Activated T-helper 2 cell treated with anti-CD3 and anti-CD28 coated beads, Interferon-gamma antibody, Interleukin-2, Interleukin-4, amounts not matched to agents 10 μg/mL and 5 μg/mL and 100 μg/mL, durations not matched to agents 14 hours and 24 hours and 36 hours (primary cell): ENCODE measurements at regions of chr2 and their contacts with region 1.

Region 1: GRCh38 chr2:120012771-120013596 is at the start of gene EPB41L5:
- DNase-seq: peak; percentile 72
- H3K4me3 Mint-ChIP-seq: peak within 1 kb of the TSS; percentile 67
- H3K27ac Mint-ChIP-seq: no peak within 1 kb of the TSS
- H3K4me1 Mint-ChIP-seq: peaks cover 10% of the 10 kb centered on the region
- H3K27me3 Mint-ChIP-seq: peaks cover 27% of the 10 kb centered on the region
- total RNA-seq, gene EPB41L5: 0.94 and 1.5 TPM in 2 replicates

Region 2: DNA sequence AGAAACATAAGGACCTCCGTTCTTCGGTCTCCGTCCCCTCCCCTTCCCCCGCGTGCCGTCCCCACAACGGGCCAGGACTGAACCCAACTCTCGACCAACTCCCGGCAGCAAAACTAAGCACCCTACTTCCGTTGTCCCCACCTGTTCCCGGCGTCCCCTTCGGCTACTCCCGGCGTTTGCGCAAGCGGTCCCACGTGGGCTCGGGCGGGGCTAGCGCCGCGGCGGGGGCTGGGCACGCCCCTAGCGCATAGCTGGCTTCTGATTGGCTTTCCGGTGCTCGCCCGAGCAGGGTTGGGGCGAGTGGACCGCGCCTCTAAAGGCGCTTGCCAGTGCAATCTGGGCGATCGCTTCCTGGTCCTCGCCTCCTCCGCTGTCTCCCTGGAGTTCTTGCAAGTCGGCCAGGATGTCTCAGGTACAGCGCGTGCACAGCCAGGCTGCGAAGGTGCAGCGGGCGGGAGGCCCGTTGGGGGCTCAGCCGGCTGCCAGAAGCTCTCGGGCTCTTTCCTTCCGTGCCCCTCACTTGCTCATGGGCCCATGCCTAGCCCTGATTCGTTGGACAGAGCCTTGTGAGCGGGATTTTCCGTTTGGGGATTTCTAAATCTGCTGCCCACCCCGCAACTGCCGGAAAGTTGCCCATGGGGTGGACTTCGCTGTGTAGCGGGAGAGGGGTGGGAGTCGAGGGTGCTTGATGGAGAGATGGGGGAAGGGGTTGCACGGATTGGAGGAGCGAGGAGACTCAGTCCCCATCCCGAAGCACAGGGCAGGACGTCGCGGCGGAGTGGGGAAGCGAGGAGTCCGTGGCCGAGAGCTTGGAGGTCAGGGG is 646.1 kb before region 1 on chr2 and contains the starts of genes C2orf76 and DBI:
- intact Hi-C with region 1: loop called (anchors 2 kb)
- DNase-seq: peak; percentile 93
- H3K4me3 Mint-ChIP-seq: peak within 1 kb of the TSS; percentile 100
- H3K27ac Mint-ChIP-seq: peak within 1 kb of the TSS; percentile 99
- H3K4me1 Mint-ChIP-seq: peaks cover 34% of the 10 kb centered on the region
- H3K27me3 Mint-ChIP-seq: no peaks in the 10 kb centered on the region
- total RNA-seq, gene C2orf76: 11.0 and 13.3 TPM in 2 replicates
- total RNA-seq, gene DBI: 162 and 168 TPM in 2 replicates

Region 3: GRCh38 chr2:119702918-119703401 is 310.0 kb before region 1 on chr2:
- intact Hi-C with region 1: loop called (anchors 10 kb)
- DNase-seq: peak; percentile 52
- H3K4me3 Mint-ChIP-seq: no peak overlapping the region
- H3K27ac Mint-ChIP-seq: no peak overlapping the region
- H3K4me1 Mint-ChIP-seq: peaks cover 4% of the 10 kb centered on the region
- H3K27me3 Mint-ChIP-seq: peaks cover 4% of the 10 kb centered on the region

Region 4: DNA sequence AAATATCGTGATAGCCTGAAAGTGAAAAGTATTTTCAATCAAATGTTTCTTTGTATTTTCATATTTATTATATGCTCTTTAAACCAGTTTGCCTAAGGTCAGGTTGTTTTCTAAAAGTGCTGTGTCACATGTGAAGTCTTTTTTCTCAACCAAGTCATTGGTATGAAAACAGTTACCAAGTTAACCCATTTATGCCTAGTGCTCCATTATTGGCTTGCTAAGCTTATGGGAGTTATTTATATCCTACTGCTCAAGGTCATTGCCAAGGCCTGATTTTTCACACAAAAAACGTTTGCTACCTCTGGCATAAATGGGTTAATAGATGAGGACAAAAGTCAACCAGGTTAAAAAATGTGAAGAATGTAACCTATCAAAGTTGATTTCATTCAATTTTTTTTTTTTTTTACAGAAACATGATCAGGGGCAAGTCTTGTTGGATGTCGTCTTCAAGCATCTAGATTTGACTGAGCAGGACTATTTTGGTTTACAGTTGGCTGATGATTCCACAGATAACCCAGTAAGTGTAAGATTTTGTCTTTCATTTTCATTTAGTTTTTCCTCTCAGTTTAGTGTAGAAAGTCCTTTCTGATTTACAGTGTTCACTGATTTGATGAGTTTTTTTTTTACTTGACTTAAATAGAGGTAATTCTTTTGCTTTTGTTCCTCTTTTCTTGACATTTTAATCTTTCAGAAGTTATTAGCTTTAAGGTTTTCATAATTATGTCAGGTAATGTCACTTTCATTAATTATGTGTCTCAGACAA is 150.7 kb before region 1 on chr2:
- intact Hi-C with region 1: loop called (anchors 5 kb)
- DNase-seq: no peak
- H3K4me3 Mint-ChIP-seq: peak overlapping the region; percentile 37
- H3K27ac Mint-ChIP-seq: peak overlapping the region; percentile 63
- H3K4me1 Mint-ChIP-seq: peaks cover 60% of the 10 kb centered on the region
- H3K27me3 Mint-ChIP-seq: no peaks in the 10 kb centered on the region

Region 5: GRCh38 chr2:120223034-120223912 is 210.3 kb after region 1 on chr2 and contains the start of gene TMEM185B:
- intact Hi-C with region 1: loop called (anchors 5 kb)
- DNase-seq: peak; percentile 88
- H3K4me3 Mint-ChIP-seq: peak within 1 kb of the TSS; percentile 82
- H3K27ac Mint-ChIP-seq: peak within 1 kb of the TSS; percentile 84
- H3K4me1 Mint-ChIP-seq: peaks cover 57% of the 10 kb centered on the region
- H3K27me3 Mint-ChIP-seq: no peaks in the 10 kb centered on the region
- total RNA-seq, gene TMEM185B: 38.7 and 39.3 TPM in 2 replicates

Region 6: DNA sequence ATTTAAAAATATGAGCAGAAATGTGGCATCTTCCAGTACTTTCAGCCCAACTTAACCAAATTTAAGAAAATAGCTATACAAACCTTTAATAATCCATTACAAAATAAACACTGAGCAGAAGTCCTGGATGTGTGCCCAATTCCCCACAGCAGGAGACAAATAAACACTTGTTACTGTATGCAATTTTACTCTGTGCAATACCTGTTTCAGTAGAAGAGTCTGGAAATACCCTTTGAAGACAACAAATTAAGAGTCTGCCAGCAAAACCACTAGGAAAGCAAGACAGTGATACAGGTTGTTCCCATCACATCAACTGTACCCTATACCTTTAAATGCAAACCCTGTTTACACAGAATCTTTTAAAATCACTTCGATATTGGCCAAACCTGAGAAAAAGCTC is 1476.3 kb after region 1 on chr2:
- intact Hi-C with region 1: no loop called
- DNase-seq: no peak
- H3K4me3 Mint-ChIP-seq: no peak overlapping the region
- H3K27ac Mint-ChIP-seq: no peak overlapping the region
- H3K4me1 Mint-ChIP-seq: peaks cover 25% of the 10 kb centered on the region
- H3K27me3 Mint-ChIP-seq: no peaks in the 10 kb centered on the region